ENCODE measurements at regions of chr2 and their contacts with region 1.

Region 1: GRCh38 chr2:176826984-176827668 is 385.5 kb upstream of the HNRNPA3 start:
- DNase-seq: no peak
- H3K4me3 Mint-ChIP-seq: peak overlapping the region; percentile 11
- H3K27ac Mint-ChIP-seq: peak overlapping the region; percentile 67
- H3K4me1 Mint-ChIP-seq: peaks cover 25% of the 10 kb centered on the region
- H3K27me3 Mint-ChIP-seq: peaks cover 6% of the 10 kb centered on the region

Region 2: DNA sequence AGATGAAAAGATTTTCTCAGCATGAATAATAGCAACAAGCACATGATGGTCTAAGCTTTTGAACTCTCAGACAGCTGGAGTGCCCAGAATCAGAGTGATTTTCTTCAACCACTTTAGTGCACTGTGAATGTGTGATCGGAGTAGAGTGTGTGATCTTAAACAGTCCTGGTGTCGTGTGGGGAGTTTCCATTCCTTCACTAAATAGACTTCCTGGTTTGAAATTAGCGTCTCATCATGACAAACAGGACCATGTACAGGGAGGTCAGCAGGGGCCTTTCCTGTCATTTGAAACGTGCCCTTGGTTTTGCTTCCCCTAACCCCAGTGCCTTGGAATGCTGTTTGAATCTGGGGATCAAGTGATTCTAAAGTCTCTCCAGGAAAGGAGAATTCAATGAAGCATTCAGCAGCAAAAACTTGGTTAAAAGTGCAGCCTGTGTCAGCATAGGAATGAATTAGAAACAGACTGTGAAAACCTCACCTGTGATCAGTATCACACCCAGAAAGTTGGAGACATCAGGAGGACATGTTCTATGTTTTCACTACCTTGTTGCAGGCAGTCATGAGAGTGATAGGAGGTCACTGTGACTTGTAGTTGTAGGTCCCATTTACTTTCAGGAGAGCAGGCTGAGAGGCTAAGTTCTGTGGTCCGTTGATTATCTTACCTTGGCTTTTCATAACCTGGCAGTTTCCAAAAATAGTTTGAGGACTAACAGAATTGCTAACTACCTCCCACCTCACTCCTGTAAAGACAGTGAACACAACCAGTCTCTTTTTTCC is 157.5 kb before region 1 on chr2:
- intact Hi-C with region 1: no loop called
- DNase-seq: no peak
- H3K4me3 Mint-ChIP-seq: no peak overlapping the region
- H3K27ac Mint-ChIP-seq: no peak overlapping the region
- H3K4me1 Mint-ChIP-seq: no peaks in the 10 kb centered on the region
- H3K27me3 Mint-ChIP-seq: peaks cover 20% of the 10 kb centered on the region

Region 3: GRCh38 chr2:176852667-176853066 is 25.5 kb after region 1 on chr2:
- intact Hi-C with region 1: loop called (anchors 2 kb)
- DNase-seq: peak; percentile 56
- H3K4me3 Mint-ChIP-seq: no peak overlapping the region
- H3K27ac Mint-ChIP-seq: peak overlapping the region; percentile 9
- H3K4me1 Mint-ChIP-seq: peaks cover 56% of the 10 kb centered on the region
- H3K27me3 Mint-ChIP-seq: peaks cover 4% of the 10 kb centered on the region

Region 4: GRCh38 chr2:176997074-176997791 is 170.1 kb after region 1 on chr2:
- intact Hi-C with region 1: loop called (anchors 5 kb)
- DNase-seq: peak; percentile 2
- H3K4me3 Mint-ChIP-seq: no peak overlapping the region
- H3K27ac Mint-ChIP-seq: peak overlapping the region; percentile 82
- H3K4me1 Mint-ChIP-seq: peaks cover 29% of the 10 kb centered on the region
- H3K27me3 Mint-ChIP-seq: peaks cover 12% of the 10 kb centered on the region

Region 5: DNA sequence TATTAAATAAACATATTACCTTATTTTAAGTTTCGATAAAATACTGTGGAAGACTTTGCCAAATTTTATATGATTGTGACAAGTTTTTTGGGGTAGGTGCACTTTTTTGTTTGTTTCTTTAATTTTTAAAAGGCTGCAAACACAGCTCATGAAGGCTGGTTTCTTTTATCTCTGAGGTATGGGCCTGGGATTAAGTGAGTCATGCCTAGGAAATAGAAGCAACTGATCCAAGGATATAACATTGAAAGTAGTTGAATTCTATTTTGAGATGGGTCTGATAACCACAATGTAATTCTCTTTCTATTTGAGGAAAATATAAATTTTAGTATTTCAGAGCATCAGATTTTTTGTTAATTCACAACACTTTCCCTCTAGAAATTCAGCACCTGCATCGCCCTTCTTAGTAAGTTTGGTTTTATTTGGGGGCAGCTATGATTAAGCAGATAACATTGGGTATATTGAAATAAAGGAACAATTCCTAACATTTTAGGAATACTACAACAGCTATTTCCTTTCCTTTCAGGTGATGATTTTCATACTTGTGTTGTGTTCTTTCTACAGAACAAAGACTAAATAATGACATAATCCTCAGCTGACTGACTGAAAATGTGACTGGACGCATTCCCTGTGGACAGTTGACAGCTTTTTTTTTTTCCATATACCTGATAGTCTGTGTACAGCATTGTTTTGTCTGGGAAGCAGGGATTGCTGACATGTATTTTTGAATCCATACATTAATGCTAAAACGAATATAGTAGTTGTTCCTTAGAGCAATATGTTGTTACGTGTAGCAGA is 1301.9 kb after region 1 on chr2:
- intact Hi-C with region 1: no loop called
- DNase-seq: no peak
- H3K4me3 Mint-ChIP-seq: no peak overlapping the region
- H3K27ac Mint-ChIP-seq: no peak overlapping the region
- H3K4me1 Mint-ChIP-seq: peaks cover 6% of the 10 kb centered on the region
- H3K27me3 Mint-ChIP-seq: no peaks in the 10 kb centered on the region